ENCODE measurements at regions of chr17 and their contacts with region 1.

Region 1: GRCh38 chr17:45317112-45317928 is 500 bp upstream of the MAP3K14 start:
- DNase-seq: peak; percentile 100
- H3K4me3 ChIP-seq: peak overlapping the region; percentile 73 to 86
- H3K27ac ChIP-seq: peak overlapping the region; percentile 71 to 96
- H3K4me1 ChIP-seq: peaks cover 22% of the 10 kb centered on the region
- H3K27me3 ChIP-seq: no peaks in the 10 kb centered on the region
- CTCF ChIP-seq: no peak
- POLR2A ChIP-seq: no peak

Region 2: GRCh38 chr17:45148183-45149036 is 168.9 kb before region 1 on chr17 and contains the start of gene HEXIM1:
- intact Hi-C with region 1: loop called (anchors 5 kb)
- DNase-seq: peak; percentile 99
- H3K4me3 ChIP-seq: peak within 1 kb of the TSS; percentile 64 to 74
- H3K27ac ChIP-seq: peak within 1 kb of the TSS; percentile 99
- H3K4me1 ChIP-seq: no peaks in the 10 kb centered on the region
- H3K27me3 ChIP-seq: no peaks in the 10 kb centered on the region
- CTCF ChIP-seq: peak in 2 of 4 experiments; percentile 17 to 29
- POLR2A ChIP-seq: peak; percentile 98
- total RNA-seq, gene HEXIM1: 34.5 to 67.1 TPM

Region 3: GRCh38 chr17:45184144-45184543 is 133.2 kb before region 1 on chr17:
- intact Hi-C with region 1: no loop called
- DNase-seq: no peak
- H3K4me3 ChIP-seq: no peak overlapping the region
- H3K27ac ChIP-seq: no peak overlapping the region
- H3K4me1 ChIP-seq: no peaks in the 10 kb centered on the region
- H3K27me3 ChIP-seq: no peaks in the 10 kb centered on the region
- CTCF ChIP-seq: no peak
- POLR2A ChIP-seq: no peak

Region 4: GRCh38 chr17:45371414-45372327 is 54.4 kb after region 1 on chr17:
- intact Hi-C with region 1: loop called (anchors 5 kb)
- DNase-seq: peak; percentile 82
- H3K4me3 ChIP-seq: peak overlapping the region; percentile 13 to 24
- H3K27ac ChIP-seq: peak overlapping the region; percentile 74 to 77
- H3K4me1 ChIP-seq: no peaks in the 10 kb centered on the region
- H3K27me3 ChIP-seq: no peaks in the 10 kb centered on the region
- CTCF ChIP-seq: peak in 2 of 4 experiments; percentile 2 to 7
- POLR2A ChIP-seq: peak; percentile 44